ENCODE measurements at regions of chr18 and their contacts with region 1.

Region 1: DNA sequence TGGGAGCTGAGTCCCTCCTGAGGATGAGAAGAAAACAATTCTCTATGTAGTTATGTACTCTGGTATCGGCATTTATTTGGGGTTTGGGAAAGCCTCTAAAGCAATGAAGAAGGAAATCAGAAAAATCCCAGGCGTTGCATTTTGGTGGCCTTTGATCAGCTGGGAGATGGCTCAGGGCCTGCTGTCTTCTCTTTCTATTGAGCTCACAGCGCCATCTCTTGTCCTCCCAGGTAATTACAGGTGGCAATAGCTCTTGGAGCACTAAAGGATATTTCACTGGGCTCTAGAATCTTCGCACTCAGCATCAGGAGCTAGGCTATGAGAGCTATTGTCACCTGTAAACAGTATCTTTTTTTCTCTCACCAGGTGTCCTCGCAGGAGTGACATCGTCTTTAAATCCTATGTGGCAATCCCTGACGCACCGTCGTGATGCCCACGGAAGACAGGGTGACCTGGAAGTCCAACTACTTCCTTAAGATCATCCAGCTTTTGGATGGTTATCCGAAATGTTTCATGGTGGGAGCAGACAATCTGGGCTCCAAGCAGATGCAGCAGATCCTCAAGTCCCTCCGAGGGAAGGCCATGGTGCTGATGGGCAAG is 76.1 kb upstream of the PMAIP1 start:
- DNase-seq: peak in 1 of 2 donors; percentile 60
- ATAC-seq: peak; percentile 64 to 85 (median 79)
- H3K4me3 ChIP-seq: no peak overlapping the region
- H3K27ac ChIP-seq: no peak overlapping the region
- H3K4me1 ChIP-seq: no peaks in the 10 kb centered on the region
- H3K27me3 ChIP-seq: peaks cover 0 to 7% (median 0%) of the 10 kb centered on the region in 7 donors
- CTCF ChIP-seq: peak; percentile 60 to 83 (median 77)

Region 2: DNA sequence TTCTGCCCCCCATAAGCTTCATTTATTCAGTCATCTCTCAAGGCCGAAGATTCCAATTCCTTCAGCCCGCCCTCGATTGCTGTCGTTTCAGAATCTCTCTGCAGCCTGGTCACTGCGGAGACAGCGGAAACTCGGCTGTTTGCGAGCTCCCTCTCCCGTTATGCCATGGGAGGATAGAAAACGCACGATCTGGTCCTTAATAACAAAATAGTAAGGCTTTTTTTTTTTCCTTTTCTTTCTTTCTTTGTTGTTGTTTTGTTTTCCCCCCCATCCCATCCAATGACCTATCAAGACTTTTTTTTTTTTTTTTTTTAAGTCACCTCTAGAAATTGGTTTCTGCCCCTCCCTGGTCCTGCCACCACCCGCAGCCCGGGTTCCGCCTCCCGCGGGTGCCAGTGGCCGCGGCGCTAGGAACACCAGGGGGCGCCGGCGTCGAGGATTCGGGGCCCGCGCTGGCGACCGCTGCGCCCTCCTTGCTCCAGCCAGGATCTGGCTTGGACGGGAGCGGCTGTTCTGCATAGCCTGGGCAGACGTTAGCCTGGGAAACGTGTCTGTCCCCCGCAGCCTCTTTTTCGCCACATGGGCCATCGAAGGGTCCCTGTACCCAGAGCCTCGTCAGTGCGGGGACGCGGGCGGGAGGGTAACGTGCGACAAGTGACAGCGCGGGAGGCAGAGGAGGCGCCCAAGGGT is 515.3 kb before region 1 on chr18:
- intact Hi-C with region 1: loop called in 2 of 10 experiments (anchors 5 kb)
- DNase-seq: peak; percentile 69 to 83
- ATAC-seq: peak; percentile 94 to 99 (median 96)
- H3K4me3 ChIP-seq: peak overlapping the region in 7 of 10 donors; percentile 27 to 53 (median 38)
- H3K27ac ChIP-seq: no peak overlapping the region
- H3K4me1 ChIP-seq: peaks cover 0 to 13% (median 6%) of the 10 kb centered on the region in 9 donors
- H3K27me3 ChIP-seq: peaks cover 0 to 74% (median 44%) of the 10 kb centered on the region in 7 donors
- CTCF ChIP-seq: peak; percentile 71 to 91 (median 81)

Region 3: GRCh38 chr18:59459369-59460079 is 364.2 kb before region 1 on chr18:
- intact Hi-C with region 1: loop called (anchors 2 to 5 kb)
- DNase-seq: no peak
- ATAC-seq: peak in 5 of 8 donors; percentile 39 to 66 (median 50)
- H3K4me3 ChIP-seq: no peak overlapping the region
- H3K27ac ChIP-seq: no peak overlapping the region
- H3K4me1 ChIP-seq: peaks cover 0 to 22% (median 7%) of the 10 kb centered on the region in 9 donors
- H3K27me3 ChIP-seq: peaks cover 0 to 5% (median 0%) of the 10 kb centered on the region in 7 donors
- CTCF ChIP-seq: peak; percentile 26 to 75 (median 63)

Region 4: GRCh38 chr18:59623456-59624368 is 200.0 kb before region 1 on chr18:
- intact Hi-C with region 1: loop called in 1 of 10 experiments (anchors 10 kb)
- DNase-seq: no peak
- ATAC-seq: peak in 6 of 8 donors; percentile 39 to 72 (median 48)
- H3K4me3 ChIP-seq: no peak overlapping the region
- H3K27ac ChIP-seq: peak overlapping the region in 2 of 10 donors; percentile 6 to 48
- H3K4me1 ChIP-seq: peaks cover 0 to 12% (median 5%) of the 10 kb centered on the region in 9 donors
- H3K27me3 ChIP-seq: no peaks in the 10 kb centered on the region
- CTCF ChIP-seq: no peak

Region 5: GRCh38 chr18:59631583-59632181 is 192.0 kb before region 1 on chr18:
- intact Hi-C with region 1: loop called (anchors 2 to 10 kb)
- DNase-seq: no peak
- ATAC-seq: no peak
- H3K4me3 ChIP-seq: no peak overlapping the region
- H3K27ac ChIP-seq: no peak overlapping the region
- H3K4me1 ChIP-seq: peaks cover 0 to 18% (median 0%) of the 10 kb centered on the region in 9 donors
- H3K27me3 ChIP-seq: no peaks in the 10 kb centered on the region
- CTCF ChIP-seq: peak; percentile 6 to 62 (median 53)

Region 6: GRCh38 chr18:59639821-59640220 is 183.9 kb before region 1 on chr18:
- intact Hi-C with region 1: loop called in 4 of 10 experiments (anchors 5 to 10 kb)
- DNase-seq: no peak
- ATAC-seq: no peak
- H3K4me3 ChIP-seq: no peak overlapping the region
- H3K27ac ChIP-seq: no peak overlapping the region
- H3K4me1 ChIP-seq: peaks cover 0 to 11% (median 0%) of the 10 kb centered on the region in 9 donors
- H3K27me3 ChIP-seq: no peaks in the 10 kb centered on the region
- CTCF ChIP-seq: no peak

Region 7: DNA sequence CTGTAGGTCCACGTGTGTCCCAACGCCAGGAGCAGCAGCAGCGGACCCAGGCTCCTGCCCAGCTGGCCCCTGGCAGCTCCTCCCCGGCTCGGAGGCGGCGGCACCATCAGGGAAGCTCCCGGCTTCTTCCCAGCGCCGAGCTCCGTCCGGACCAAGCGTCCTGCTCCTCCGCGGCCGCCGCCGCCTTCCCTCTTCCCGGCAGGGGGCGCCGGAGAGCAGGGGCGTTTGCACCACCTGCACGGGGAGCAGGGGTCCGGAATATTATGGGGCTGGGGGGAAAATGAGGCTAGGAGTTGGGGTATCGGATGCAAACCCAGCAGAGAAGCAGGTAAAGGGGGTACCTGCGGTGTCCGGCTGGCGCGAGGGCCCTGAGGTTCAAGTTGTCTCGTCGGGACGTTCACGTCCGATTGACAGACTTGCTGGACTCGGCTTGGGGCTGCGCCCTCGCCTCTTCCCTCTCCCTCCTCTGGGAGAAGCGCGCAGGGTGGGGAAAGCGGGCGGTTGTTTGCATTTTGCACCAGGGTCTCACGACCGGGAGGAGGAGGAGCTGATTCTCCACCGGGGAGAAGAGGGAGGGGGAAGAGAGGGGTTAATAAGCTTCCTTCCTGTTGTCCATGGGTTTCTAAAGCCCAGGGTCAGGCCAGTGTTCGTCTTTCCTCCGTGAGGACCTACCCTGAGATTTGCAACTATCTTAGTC is 126.3 kb before region 1 on chr18 and contains the start of gene CCBE1:
- intact Hi-C with region 1: loop called in 1 of 10 experiments (anchors 5 kb)
- DNase-seq: peak; percentile 15 to 80
- ATAC-seq: peak; percentile 77 to 92 (median 86)
- H3K4me3 ChIP-seq: peak within 1 kb of the TSS; percentile 9 to 69 (median 49)
- H3K27ac ChIP-seq: peak within 1 kb of the TSS in 3 of 10 donors; percentile 6 to 41 (median 12)
- H3K4me1 ChIP-seq: peaks cover 4 to 25% (median 12%) of the 10 kb centered on the region in 9 donors
- H3K27me3 ChIP-seq: peaks cover 8 to 66% (median 45%) of the 10 kb centered on the region in 7 donors
- CTCF ChIP-seq: peak; percentile 67 to 87 (median 76)
- total RNA-seq, gene CCBE1: 0.24 to 10.3 (median 2.2) TPM

Measured in heart right ventricle (tissue), 16 donors.